Left ventricle myocardium inferior (tissue), 1 donor: ENCODE measurements at regions of chr7 and their contacts with region 1.

Region 1: GRCh38 chr7:19665399-19666008 is 43.3 kb downstream of the POLR1F start:
- DNase-seq: no peak
- H3K4me3 ChIP-seq: no peak overlapping the region
- H3K27ac ChIP-seq: no peak overlapping the region
- H3K4me1 ChIP-seq: no peaks in the 10 kb centered on the region
- H3K27me3 ChIP-seq: peaks cover 6% of the 10 kb centered on the region
- CTCF ChIP-seq: peak; percentile 66

Region 2: GRCh38 chr7:17680943-17681351 is 1984.6 kb before region 1 on chr7:
- intact Hi-C with region 1: loop called (anchors 10 kb)
- DNase-seq: no peak
- H3K4me3 ChIP-seq: no peak overlapping the region
- H3K27ac ChIP-seq: no peak overlapping the region
- H3K4me1 ChIP-seq: peaks cover 40% of the 10 kb centered on the region
- H3K27me3 ChIP-seq: no peaks in the 10 kb centered on the region
- CTCF ChIP-seq: peak; percentile 70

Region 3: DNA sequence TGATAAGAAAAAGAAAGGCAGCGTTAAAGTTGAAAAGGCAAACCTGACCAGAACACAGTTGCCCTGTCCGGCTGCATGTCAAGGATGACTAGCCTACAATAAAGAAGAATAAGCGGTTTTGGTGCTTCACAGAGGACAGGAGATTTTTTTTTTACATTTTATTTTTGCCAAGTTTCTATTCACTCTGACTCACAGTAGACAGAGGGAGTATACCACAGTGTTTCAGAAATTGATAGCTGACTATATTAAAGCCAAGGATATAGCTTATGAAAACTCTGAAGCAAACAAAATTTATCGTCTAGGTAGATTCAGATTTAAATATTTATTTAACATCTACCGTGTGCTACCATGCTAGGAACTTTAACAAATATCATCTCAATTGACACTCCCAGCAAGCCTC is 60.3 kb after region 1 on chr7:
- intact Hi-C with region 1: no loop called
- DNase-seq: no peak
- H3K4me3 ChIP-seq: no peak overlapping the region
- H3K27ac ChIP-seq: no peak overlapping the region
- H3K4me1 ChIP-seq: no peaks in the 10 kb centered on the region
- H3K27me3 ChIP-seq: peaks cover 43% of the 10 kb centered on the region
- CTCF ChIP-seq: no peak